Dorsolateral prefrontal cortex (tissue), 120 donors: ENCODE measurements at regions of chr15 and their contacts with region 1.

Region 1: GRCh38 chr15:93018580-93018979 is 70.4 kb downstream of the RGMA start:
- DNase-seq: peak in 2 of 10 donors; percentile 55 to 56
- H3K4me3 ChIP-seq: no peak overlapping the region
- H3K27ac ChIP-seq: peak overlapping the region in 52 of 59 donors; percentile 0 to 80 (median 45)
- H3K27me3 ChIP-seq: no peaks in the 10 kb centered on the region
- CTCF ChIP-seq: peak in 54 of 56 donors; percentile 17 to 63 (median 44)

Region 2: GRCh38 chr15:92797168-92797951 is 221.2 kb before region 1 on chr15:
- intact Hi-C with region 1: loop called in 1 of 2 experiments (anchors 5 kb)
- DNase-seq: peak in 1 of 10 donors; percentile 13
- H3K4me3 ChIP-seq: no peak overlapping the region
- H3K27ac ChIP-seq: peak overlapping the region in 41 of 59 donors; percentile 0 to 80 (median 40)
- H3K27me3 ChIP-seq: no peaks in the 10 kb centered on the region
- CTCF ChIP-seq: peak; percentile 71 to 97 (median 88)

Region 3: DNA sequence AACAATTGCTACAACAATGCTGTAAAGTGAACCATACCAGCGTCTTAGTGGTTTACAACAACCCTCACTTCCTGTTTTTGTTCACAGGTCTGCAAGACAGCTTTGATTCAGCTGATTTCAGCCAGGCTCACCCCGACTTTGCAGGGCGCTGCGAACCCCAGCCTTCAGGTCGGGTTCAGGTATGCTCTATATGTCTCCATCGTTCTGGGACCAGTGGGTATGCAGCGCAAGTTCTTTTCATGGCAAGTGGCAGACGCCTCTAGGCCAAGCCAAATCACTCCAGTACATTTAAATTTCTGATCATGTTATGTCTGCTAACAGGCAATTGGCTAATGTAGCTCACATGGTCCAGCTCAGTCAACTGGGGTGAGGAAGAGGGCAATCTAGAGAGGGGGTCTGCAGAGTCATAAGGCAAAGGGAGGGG is 122.8 kb after region 1 on chr15:
- intact Hi-C with region 1: no loop called
- DNase-seq: no peak
- H3K4me3 ChIP-seq: no peak overlapping the region
- H3K27ac ChIP-seq: no peak overlapping the region
- H3K27me3 ChIP-seq: no peaks in the 10 kb centered on the region
- CTCF ChIP-seq: no peak